ENCODE measurements at regions of chr1 and their contacts with region 1.

Region 1: GRCh38 chr1:101238681-101239094 is 1.9 kb downstream of the S1PR1 start:
- DNase-seq: peak; percentile 52 to 55
- ATAC-seq: peak; percentile 34 to 66
- H3K4me3 ChIP-seq: peak overlapping the region; percentile 63 to 87 (median 73)
- H3K27ac ChIP-seq: peak overlapping the region; percentile 68 to 79 (median 79)
- H3K4me1 ChIP-seq: peaks cover 9 to 26% of the 10 kb centered on the region in 2 donors
- H3K27me3 ChIP-seq: peaks cover 30 to 34% (median 33%) of the 10 kb centered on the region in 3 donors
- CTCF ChIP-seq: peak; percentile 62 to 87 (median 82)
- POLR2A ChIP-seq: peak in 1 of 2 donors; percentile 18

Region 2: GRCh38 chr1:101025657-101026504 is 212.8 kb before region 1 on chr1 and contains the start of gene DPH5:
- in situ Hi-C with region 1: no loop called
- intact Hi-C with region 1: loop called (anchors 5 kb)
- DNase-seq: peak; percentile 85 to 90
- ATAC-seq: peak; percentile 92 to 98
- H3K4me3 ChIP-seq: peak within 1 kb of the TSS; percentile 73 to 87 (median 82)
- H3K27ac ChIP-seq: peak within 1 kb of the TSS; percentile 92 to 95 (median 94)
- H3K4me1 ChIP-seq: peaks cover 28 to 34% of the 10 kb centered on the region in 2 donors
- H3K27me3 ChIP-seq: no peaks in the 10 kb centered on the region
- CTCF ChIP-seq: no peak
- POLR2A ChIP-seq: peak; percentile 66 to 80
- total RNA-seq, gene DPH5: 9.4 to 30.0 (median 22.2) TPM

Region 3: GRCh38 chr1:101167891-101168290 is 70.8 kb before region 1 on chr1:
- in situ Hi-C with region 1: no loop called
- intact Hi-C with region 1: loop called (anchors 10 kb)
- DNase-seq: no peak
- ATAC-seq: no peak
- H3K4me3 ChIP-seq: no peak overlapping the region
- H3K27ac ChIP-seq: no peak overlapping the region
- H3K4me1 ChIP-seq: no peaks in the 10 kb centered on the region
- H3K27me3 ChIP-seq: no peaks in the 10 kb centered on the region
- CTCF ChIP-seq: no peak
- POLR2A ChIP-seq: no peak

Measured in gastrocnemius medialis (tissue), 4 donors.